A549 (cell line): ENCODE measurements at regions of chr3 and their contacts with region 1.

Region 1: GRCh38 chr3:108589146-108589997 is at the starts of genes CIP2A and DZIP3:
- DNase-seq: peak; percentile 82 to 96
- ATAC-seq: peak; percentile 98 to 99
- H3K4me3 ChIP-seq: peak within 1 kb of the TSS; percentile 69
- H3K27ac ChIP-seq: peak within 1 kb of the TSS; percentile 96 to 97
- H3K4me1 ChIP-seq: peaks cover 16% of the 10 kb centered on the region
- CTCF ChIP-seq: no peak
- EP300 ChIP-seq: no peak
- POLR2A ChIP-seq: peak; percentile 91
- RAD21 ChIP-seq: no peak
- polyA plus RNA-seq, gene CIP2A: 31.8 and 32.6 TPM in 2 replicates
- polyA plus RNA-seq, gene DZIP3: 15.6 and 22.2 TPM in 2 replicates

Region 2: GRCh38 chr3:108578064-108578463 is 11.3 kb before region 1 on chr3:
- CTCF ChIA-PET with region 1: interaction called, 3 read pairs
- POLR2A ChIA-PET with region 1: interaction called, 12 read pairs
- DNase-seq: no peak
- ATAC-seq: no peak
- H3K4me3 ChIP-seq: no peak overlapping the region
- H3K27ac ChIP-seq: no peak overlapping the region
- H3K4me1 ChIP-seq: no peaks in the 10 kb centered on the region
- CTCF ChIP-seq: no peak
- EP300 ChIP-seq: no peak
- POLR2A ChIP-seq: no peak
- RAD21 ChIP-seq: no peak

Region 3: GRCh38 chr3:108608750-108609149 is 19.4 kb after region 1 on chr3:
- CTCF ChIA-PET with region 1: no interaction called
- POLR2A ChIA-PET with region 1: no interaction called
- DNase-seq: no peak
- ATAC-seq: no peak
- H3K4me3 ChIP-seq: no peak overlapping the region
- H3K27ac ChIP-seq: no peak overlapping the region
- H3K4me1 ChIP-seq: no peaks in the 10 kb centered on the region
- CTCF ChIP-seq: no peak
- EP300 ChIP-seq: no peak
- POLR2A ChIP-seq: no peak
- RAD21 ChIP-seq: no peak

Region 4: GRCh38 chr3:108645364-108645763 is 56.0 kb after region 1 on chr3:
- CTCF ChIA-PET with region 1: no interaction called
- POLR2A ChIA-PET with region 1: no interaction called
- DNase-seq: no peak
- ATAC-seq: no peak
- H3K4me3 ChIP-seq: no peak overlapping the region
- H3K27ac ChIP-seq: no peak overlapping the region
- H3K4me1 ChIP-seq: no peaks in the 10 kb centered on the region
- CTCF ChIP-seq: no peak
- EP300 ChIP-seq: no peak
- POLR2A ChIP-seq: no peak
- RAD21 ChIP-seq: no peak

Region 5: GRCh38 chr3:108818404-108818803 is 229.0 kb after region 1 on chr3:
- CTCF ChIA-PET with region 1: no interaction called
- POLR2A ChIA-PET with region 1: no interaction called
- DNase-seq: peak in 1 of 2 experiments; percentile 52
- ATAC-seq: peak; percentile 76 to 88
- H3K4me3 ChIP-seq: no peak overlapping the region
- H3K27ac ChIP-seq: no peak overlapping the region
- H3K4me1 ChIP-seq: no peaks in the 10 kb centered on the region
- CTCF ChIP-seq: 0 out of 3 replicates have a peak, but pooled peaks have one; percentile 16
- EP300 ChIP-seq: no peak
- POLR2A ChIP-seq: no peak
- RAD21 ChIP-seq: peak in 1 of 2 experiments; percentile 46; a peak in 2 of 5 replicates